ENCODE measurements at regions of chr3 and their contacts with region 1.

Region 1: DNA sequence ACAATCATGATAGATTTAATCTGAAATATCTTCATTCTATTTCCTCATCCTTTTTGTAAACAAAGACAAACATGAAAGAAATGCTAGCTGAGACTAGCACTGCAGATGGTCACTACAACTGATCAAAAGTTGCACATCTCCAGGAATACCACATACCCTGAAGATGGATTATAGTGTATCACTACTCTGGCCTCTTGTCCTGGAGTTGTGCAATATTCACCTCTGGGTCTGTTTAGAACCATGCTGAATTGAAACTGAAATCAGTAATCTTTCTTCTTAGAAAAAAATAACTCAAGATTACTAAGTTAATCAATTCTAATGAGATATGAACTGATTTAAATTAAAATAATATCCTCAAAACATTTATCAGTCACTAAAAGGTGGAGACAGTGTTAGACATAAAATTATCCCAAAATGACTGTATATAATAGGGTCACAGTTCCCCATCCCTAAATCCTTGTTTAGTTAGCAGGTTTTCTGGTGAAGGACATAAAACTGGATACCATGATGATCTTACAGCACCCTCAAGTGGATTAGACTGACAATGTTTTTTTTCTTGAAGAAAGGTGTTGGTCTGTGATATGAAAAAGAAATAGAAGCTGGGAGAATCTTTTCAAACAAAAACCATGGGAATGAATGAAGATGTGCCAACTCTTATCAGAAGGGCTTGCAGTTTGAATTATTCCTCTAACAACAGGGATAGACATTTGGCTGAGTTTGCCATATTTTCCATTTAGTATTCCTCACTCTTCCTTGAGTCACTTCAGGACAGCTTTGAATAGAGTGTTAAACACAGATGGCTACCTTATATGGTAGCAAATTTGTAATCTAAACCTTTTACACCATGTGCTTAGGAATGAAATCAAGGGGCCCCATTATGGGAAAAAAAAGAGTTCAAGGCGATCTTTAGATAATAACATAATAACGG is 7.1 kb upstream of the TTC14 start:
- DNase-seq: peak; percentile 56
- H3K4me3 ChIP-seq: no peak overlapping the region
- H3K27ac ChIP-seq: no peak overlapping the region
- H3K4me1 ChIP-seq: peaks cover 7% of the 10 kb centered on the region
- H3K27me3 ChIP-seq: no peaks in the 10 kb centered on the region
- CTCF ChIP-seq: peak; percentile 60 to 76

Region 2: GRCh38 chr3:179811321-179812095 is 783.4 kb before region 1 on chr3:
- CTCF ChIA-PET with region 1: interaction called, 7 read pairs
- dilution Hi-C with region 1: no loop called
- in situ Hi-C with region 1: loop called (anchors 5 to 10 kb)
- intact Hi-C with region 1: loop called (anchors 1 kb)
- DNase-seq: peak; percentile 75
- H3K4me3 ChIP-seq: no peak overlapping the region
- H3K27ac ChIP-seq: peak overlapping the region; percentile 33
- H3K4me1 ChIP-seq: no peaks in the 10 kb centered on the region
- H3K27me3 ChIP-seq: no peaks in the 10 kb centered on the region
- CTCF ChIP-seq: peak; percentile 72 to 83

Region 3: DNA sequence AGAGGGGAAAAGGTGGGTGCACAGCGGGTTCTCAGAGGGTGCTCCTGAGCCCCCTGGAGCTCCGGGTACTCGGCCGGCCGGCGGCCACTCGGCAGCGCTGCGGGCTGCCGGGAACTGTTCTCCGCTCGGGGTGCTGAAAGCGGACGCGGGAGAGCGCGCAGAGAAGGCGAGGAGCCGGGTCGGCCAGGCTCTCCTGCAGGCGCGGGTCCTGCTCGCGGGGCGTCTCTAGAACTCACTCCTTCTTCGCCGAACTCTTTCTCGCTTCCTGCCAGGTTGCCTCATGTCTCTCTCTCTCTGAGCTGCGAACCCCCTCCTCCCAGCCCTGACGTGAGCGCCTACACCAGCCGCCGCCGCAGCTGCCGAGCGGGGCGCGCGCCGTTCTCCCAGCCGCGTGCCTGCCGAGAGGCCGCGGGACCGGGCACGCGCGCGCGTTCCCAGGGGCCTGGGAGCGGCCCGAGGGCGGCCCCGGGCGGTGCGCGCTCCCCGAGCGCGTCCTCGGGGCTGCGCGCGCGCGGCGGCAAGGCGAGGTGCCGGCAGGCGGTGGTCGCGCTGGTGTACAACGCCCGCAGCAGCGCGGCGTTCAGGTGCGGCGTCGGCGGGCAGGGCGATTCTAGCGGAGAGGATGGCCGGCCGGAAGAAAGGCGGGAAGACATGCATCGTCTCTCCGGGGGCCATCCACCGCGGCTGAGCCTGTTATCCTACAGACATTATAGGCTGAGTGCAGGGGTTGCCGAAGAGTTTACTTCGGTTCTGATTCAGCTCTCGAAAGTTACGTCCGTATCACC is 558.0 kb before region 1 on chr3 and contains the start of gene PEX5L:
- CTCF ChIA-PET with region 1: no interaction called
- dilution Hi-C with region 1: no loop called
- in situ Hi-C with region 1: no loop called
- intact Hi-C with region 1: loop called (anchors 2 kb)
- DNase-seq: peak; percentile 62
- H3K4me3 ChIP-seq: peak within 1 kb of the TSS; percentile 38 to 72 (median 61)
- H3K27ac ChIP-seq: no peak within 1 kb of the TSS
- H3K4me1 ChIP-seq: peaks cover 15% of the 10 kb centered on the region
- H3K27me3 ChIP-seq: no peaks in the 10 kb centered on the region
- CTCF ChIP-seq: peak in 1 of 2 donors; percentile 19
- total RNA-seq, gene PEX5L: 0.83 to 7.1 TPM

Region 4: GRCh38 chr3:180250169-180250568 is 344.7 kb before region 1 on chr3:
- CTCF ChIA-PET with region 1: interaction called, 4 read pairs
- dilution Hi-C with region 1: no loop called
- in situ Hi-C with region 1: no loop called
- intact Hi-C with region 1: loop called (anchors 10 kb)
- DNase-seq: peak; percentile 79
- H3K4me3 ChIP-seq: no peak overlapping the region
- H3K27ac ChIP-seq: no peak overlapping the region
- H3K4me1 ChIP-seq: peaks cover 48% of the 10 kb centered on the region
- H3K27me3 ChIP-seq: no peaks in the 10 kb centered on the region
- CTCF ChIP-seq: no peak

Region 5: DNA sequence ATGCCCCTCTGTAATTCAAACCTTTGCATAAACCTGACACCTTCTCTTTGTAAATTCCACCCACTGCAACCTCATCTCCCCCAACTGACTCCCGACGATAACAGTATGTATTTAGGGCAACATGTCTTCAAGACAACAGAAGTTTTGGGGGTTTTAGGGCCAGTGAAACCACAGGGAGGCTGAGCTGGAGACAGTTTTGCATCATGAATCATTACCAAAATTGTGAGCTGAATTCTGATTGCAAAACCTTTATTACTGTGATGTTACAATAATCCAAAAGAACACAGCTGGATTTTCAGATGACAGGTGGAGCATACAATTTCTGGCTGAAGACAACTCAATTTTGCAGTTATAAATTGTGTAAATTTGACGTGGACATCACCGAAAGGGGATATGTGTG is 274.3 kb before region 1 on chr3:
- CTCF ChIA-PET with region 1: no interaction called
- dilution Hi-C with region 1: no loop called
- in situ Hi-C with region 1: no loop called
- intact Hi-C with region 1: no loop called
- DNase-seq: peak; percentile 19
- H3K4me3 ChIP-seq: no peak overlapping the region
- H3K27ac ChIP-seq: no peak overlapping the region
- H3K4me1 ChIP-seq: peaks cover 13% of the 10 kb centered on the region
- H3K27me3 ChIP-seq: no peaks in the 10 kb centered on the region
- CTCF ChIP-seq: no peak